ENCODE measurements at regions of chr7 and their contacts with region 1.

Region 1: DNA sequence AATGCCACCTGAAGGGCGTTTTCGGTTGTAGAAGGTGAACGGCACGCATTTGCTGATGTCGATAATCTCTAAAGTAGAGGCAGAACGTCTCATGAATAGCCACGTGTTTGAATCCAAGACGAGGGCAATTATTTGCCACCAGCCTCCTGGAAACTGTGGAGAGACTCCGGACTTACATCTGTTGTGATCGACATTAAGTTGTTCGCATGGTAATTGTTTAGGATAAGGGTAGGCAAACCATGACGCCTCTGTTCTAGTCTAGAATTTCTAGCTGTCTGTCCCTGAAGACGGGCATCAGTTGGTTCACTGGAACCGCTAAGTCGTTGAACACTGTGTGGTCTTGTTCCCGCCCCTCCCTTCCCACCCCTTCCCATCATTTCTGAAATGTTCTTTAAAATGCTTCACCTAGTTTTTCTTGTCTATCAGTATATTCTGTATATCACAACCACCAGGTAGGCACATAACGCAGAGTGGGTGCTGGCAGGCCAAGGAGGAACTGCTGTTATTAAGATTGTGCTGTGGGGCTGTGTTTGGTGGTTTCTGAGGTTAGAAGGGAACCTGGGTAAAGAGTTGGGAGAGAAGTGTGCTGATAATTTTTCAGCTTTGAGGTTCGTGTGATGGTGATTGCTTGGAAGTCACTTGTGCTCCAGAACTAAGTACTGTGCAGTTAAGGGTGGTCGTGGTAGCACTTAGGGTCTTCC is 1.2 kb downstream of the UBE3C start:
- DNase-seq: no peak
- ATAC-seq: no peak
- H3K4me3 ChIP-seq: peak overlapping the region; percentile 60 to 97 (median 78)
- H3K27ac ChIP-seq: peak overlapping the region; percentile 85 to 96 (median 92)
- H3K4me1 ChIP-seq: peaks cover 10 to 60% (median 32%) of the 10 kb centered on the region in 12 donors
- H3K27me3 ChIP-seq: no peaks in the 10 kb centered on the region
- CTCF ChIP-seq: no peak
- POLR2A ChIP-seq: no peak

Region 2: DNA sequence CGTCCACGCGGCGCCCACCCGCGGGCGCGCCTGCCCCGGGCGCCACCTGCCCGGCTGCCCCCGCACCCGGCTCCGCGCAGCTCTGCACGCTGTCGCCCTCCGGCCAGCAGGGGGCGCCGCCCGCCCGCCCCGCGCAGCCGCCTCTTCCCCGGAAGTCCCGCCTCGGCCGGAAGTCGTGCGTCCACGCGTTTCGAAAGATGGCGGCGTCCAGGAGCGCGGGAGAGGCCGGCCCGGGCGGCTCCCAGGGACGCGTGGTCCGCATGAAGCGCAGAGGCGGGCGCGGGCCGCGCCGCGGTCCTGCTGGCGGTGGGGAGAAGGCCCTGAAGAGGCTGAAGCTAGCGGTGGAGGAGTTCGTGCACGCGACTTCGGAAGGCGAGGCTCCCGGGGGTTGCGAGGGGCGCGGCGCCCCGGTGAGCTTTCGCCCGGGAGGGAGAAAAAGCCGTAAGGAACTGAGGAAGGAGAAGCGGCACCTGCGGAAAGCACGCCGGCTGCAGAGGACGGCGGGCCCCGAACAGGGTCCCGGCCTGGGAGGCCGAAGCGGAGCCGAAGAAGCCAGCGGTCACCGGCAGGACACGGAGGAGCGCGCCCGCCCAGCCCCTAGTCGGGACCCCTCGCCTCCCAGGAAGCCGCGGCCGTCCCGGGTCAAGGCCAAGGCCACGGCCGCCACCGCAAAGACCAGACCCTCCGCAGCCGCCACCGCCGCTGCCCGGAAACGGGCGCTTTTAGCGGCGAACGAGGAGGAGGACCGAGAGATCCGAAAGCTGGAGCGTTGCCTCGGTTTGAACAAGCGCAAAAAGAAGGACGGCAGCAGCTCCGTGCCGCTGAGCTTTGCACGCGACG is 190.2 kb before region 1 on chr7 and contains the start of gene NOM1:
- intact Hi-C with region 1: loop called in 1 of 10 experiments (anchors 5 kb)
- DNase-seq: peak; percentile 89 to 97 (median 93)
- ATAC-seq: peak; percentile 76 to 99 (median 96)
- H3K4me3 ChIP-seq: peak within 1 kb of the TSS; percentile 81 to 100 (median 92)
- H3K27ac ChIP-seq: peak within 1 kb of the TSS in 11 of 12 donors; percentile 3 to 79 (median 64)
- H3K4me1 ChIP-seq: peaks cover 0 to 33% (median 20%) of the 10 kb centered on the region in 12 donors
- H3K27me3 ChIP-seq: peaks cover 0 to 23% (median 0%) of the 10 kb centered on the region in 9 donors
- CTCF ChIP-seq: peak; percentile 54 to 100 (median 81)
- POLR2A ChIP-seq: peak in 1 of 2 donors; percentile 55
- total RNA-seq, gene NOM1: 6.0 to 12.2 (median 9.1) TPM

Region 3: DNA sequence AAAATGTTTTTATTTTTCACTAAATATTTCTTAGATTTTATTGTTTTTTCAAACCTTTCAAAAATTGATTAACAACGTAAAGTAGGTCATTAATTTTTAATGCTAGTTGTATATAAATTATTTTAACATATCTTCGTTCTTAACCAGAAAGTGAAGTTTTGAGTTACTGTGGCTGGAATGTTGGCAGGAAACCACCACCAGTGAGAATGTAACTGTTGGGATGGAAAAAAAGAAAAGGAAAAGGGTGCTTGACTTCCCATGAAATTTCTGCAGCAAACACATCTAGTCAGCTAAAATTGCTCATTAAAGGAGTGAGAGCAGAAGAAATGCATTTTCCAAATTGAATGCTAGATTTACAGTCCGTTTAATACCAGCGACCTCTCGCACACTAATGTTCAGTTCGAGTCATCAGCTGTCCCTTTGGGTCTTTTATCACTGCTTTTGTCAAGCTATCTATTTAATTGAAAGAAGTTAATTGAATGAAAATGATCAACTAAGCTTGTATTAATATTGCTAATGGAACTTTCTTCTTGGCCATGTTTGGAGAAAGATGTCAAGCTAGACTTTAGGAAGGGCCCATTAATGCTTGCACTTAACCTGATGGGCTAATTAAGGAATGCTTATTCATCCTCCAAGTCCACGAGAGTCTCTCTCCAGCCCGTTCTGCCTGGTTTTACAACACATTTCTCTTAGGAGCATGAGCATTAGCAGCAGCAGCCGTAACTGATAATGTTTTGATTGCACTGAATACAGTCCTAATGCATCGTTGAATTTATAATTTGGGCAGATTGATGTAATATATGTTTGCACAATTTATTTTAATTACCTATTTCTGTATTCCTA is 68.8 kb after region 1 on chr7:
- intact Hi-C with region 1: loop called in 1 of 10 experiments (anchors 10 kb)
- DNase-seq: no peak
- ATAC-seq: no peak
- H3K4me3 ChIP-seq: no peak overlapping the region
- H3K27ac ChIP-seq: no peak overlapping the region
- H3K4me1 ChIP-seq: peaks cover 0 to 5% (median 0%) of the 10 kb centered on the region in 12 donors
- H3K27me3 ChIP-seq: no peaks in the 10 kb centered on the region
- CTCF ChIP-seq: no peak
- POLR2A ChIP-seq: no peak

Region 4: GRCh38 chr7:157273208-157274093 is 133.5 kb after region 1 on chr7:
- intact Hi-C with region 1: no loop called
- DNase-seq: peak; percentile 58 to 88 (median 70)
- ATAC-seq: peak; percentile 59 to 80 (median 76)
- H3K4me3 ChIP-seq: no peak overlapping the region
- H3K27ac ChIP-seq: peak overlapping the region in 1 of 12 donors; percentile 41
- H3K4me1 ChIP-seq: peaks cover 0 to 63% (median 19%) of the 10 kb centered on the region in 12 donors
- H3K27me3 ChIP-seq: peaks cover 0 to 3% (median 0%) of the 10 kb centered on the region in 9 donors
- CTCF ChIP-seq: peak; percentile 91 to 100 (median 98)
- POLR2A ChIP-seq: no peak

Measured in heart left ventricle (tissue), 16 donors.